ENCODE measurements at regions of chr22 and their contacts with region 1.

Region 1: DNA sequence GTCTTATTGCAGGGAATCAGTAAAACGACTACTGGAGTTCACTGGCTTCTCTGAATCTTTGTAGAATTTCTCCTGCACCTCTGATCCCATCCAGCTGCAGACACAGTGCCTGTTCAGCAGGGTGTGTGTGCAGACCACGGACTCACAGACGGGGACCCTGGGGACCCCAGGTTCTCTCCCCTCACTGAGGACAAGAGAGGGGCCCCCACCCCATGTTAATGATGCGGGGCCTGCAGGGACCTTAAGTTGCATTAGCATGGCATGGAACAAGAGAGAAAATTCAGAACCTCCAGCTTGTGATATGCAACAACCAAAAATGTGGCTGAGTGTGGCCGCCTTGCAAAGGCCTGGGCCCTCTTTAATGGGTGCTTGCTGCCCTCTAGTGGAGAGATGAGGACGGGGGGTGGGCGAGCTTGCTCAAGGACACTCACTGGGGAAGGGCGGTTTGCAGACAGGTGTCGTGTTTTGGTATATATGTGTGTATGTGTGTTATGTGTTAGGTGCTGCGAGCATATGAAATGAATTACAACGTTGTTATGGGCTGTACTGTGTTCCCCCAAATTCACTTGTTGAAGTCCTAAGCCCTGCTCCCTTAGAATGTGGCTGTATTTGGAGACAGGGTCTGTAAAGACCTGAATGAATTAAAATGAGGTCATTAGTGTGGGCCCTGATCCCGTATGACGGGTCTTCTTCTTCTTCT is 84.4 kb upstream of the SEPTIN5 start:
- DNase-seq: peak; percentile 80
- H3K4me3 ChIP-seq: no peak overlapping the region
- H3K27ac ChIP-seq: no peak overlapping the region
- H3K4me1 ChIP-seq: no peaks in the 10 kb centered on the region
- H3K27me3 ChIP-seq: peaks cover 0 to 5% of the 10 kb centered on the region in 2 experiments
- CTCF ChIP-seq: peak; percentile 91 to 92
- POLR2A ChIP-seq: no peak

Region 2: GRCh38 chr22:19143967-19144400 is 485.9 kb before region 1 on chr22:
- CTCF ChIA-PET with region 1: interaction called, 6 read pairs
- POLR2A ChIA-PET with region 1: interaction called, 3 read pairs
- dilution Hi-C with region 1: no loop called
- intact Hi-C with region 1: loop called (anchors 1 kb)
- DNase-seq: no peak
- H3K4me3 ChIP-seq: peak overlapping the region; percentile 69 to 94 (median 78)
- H3K27ac ChIP-seq: peak overlapping the region; percentile 54
- H3K4me1 ChIP-seq: peaks cover 7% of the 10 kb centered on the region
- H3K27me3 ChIP-seq: peaks cover 17 to 21% of the 10 kb centered on the region in 2 experiments
- CTCF ChIP-seq: no peak
- POLR2A ChIP-seq: no peak

Region 3: DNA sequence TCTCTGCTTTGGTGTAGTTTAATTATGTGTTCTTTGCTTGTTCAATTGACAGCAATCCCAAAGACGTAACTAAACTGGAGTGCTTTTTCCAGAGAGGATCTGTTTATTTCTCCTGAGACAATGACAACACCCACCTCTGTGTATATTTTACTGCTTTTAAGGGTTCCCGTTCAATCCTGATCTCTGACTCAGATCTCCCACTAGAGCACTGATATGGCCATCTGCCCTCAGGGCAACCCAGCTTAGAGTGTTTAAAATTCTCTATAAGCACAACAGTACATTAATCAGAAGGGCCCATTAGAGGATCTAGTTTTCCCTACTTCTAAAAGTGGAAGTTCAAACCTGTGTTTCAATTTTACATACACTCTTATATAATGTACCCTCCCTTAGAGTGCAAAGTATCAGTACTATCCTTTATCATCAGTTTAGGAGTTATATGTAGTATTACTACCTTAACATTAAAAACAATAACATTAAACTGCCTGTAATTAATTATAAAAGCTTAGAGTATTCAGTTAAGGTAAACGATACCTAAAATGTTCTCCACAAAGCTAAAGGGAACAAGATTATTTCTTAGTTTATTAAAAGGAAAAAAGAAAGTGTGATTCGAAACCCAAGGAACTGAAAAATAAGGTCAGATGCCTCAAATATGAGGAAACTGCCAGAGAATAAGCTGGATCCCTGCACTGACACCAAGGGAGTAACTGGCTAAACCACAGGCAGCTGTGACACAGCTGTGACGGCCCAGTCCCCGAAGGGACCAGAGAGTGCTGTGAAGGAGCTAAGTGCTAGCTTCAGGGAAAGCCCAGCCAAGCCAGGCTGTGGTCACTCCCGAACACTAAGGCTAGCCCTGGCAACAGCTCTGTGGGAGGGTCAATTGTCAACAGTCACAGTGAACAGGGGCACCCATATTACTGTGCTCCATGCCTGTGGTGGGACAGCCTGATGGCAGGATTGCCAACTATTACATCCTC is 166.1 kb before region 1 on chr22:
- CTCF ChIA-PET with region 1: interaction called, 13 read pairs
- POLR2A ChIA-PET with region 1: no interaction called
- dilution Hi-C with region 1: no loop called
- intact Hi-C with region 1: no loop called
- DNase-seq: no peak
- H3K4me3 ChIP-seq: no peak overlapping the region
- H3K27ac ChIP-seq: no peak overlapping the region
- H3K4me1 ChIP-seq: no peaks in the 10 kb centered on the region
- H3K27me3 ChIP-seq: no peaks in the 10 kb centered on the region
- CTCF ChIP-seq: no peak
- POLR2A ChIP-seq: no peak

Region 4: GRCh38 chr22:19495562-19496323 is 134.1 kb before region 1 on chr22:
- CTCF ChIA-PET with region 1: interaction called, 358 read pairs
- POLR2A ChIA-PET with region 1: interaction called, 6 read pairs
- dilution Hi-C with region 1: no loop called
- intact Hi-C with region 1: loop called (anchors 1 kb)
- DNase-seq: peak; percentile 69
- H3K4me3 ChIP-seq: no peak overlapping the region
- H3K27ac ChIP-seq: no peak overlapping the region
- H3K4me1 ChIP-seq: no peaks in the 10 kb centered on the region
- H3K27me3 ChIP-seq: no peaks in the 10 kb centered on the region
- CTCF ChIP-seq: peak; percentile 24 to 37
- POLR2A ChIP-seq: no peak

Region 5: DNA sequence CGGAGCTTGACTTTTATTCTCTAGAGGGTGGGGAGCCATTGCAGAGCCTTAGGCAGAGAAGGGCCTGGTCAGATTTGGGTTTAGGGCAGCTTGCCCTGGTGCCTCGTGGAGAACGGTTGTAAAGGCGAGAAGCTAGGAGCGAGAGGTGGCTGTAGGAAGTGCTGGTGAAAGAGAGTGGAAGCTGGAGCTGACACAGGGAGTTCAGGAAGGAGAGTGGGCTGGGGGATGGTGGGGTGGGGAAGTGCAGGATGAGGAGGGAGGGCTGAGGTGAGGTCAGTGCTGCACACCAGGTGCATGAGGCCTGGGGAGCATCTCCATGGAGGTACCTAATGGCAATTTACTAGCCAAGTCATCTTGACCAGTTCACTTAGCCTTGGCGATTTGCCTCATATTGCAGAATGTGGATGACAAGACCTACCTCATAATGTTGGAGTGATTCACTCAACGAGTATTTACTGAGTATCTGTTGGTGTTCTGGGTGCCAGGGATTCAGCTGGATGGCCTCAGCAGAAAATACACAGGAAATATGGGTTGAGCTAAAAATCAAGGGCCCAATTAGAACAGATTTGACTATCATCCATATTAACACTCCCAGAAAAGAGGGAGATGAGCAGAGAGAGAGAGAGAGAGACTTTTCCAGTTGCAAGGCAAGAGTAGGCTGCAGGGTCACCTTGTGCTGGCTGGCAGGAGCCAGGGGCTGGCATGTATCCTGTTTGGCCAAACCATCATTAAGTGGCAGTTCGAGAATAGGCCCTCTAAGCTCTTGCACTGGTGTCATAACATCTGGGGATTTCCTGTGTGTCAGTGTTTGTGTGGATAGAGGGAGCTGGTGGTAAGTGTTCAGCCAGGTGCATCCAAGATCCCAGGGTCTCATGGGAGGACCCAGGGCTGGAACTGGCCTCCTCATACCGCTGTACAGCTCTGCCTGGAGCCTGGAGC is 61.3 kb before region 1 on chr22:
- CTCF ChIA-PET with region 1: interaction called, 13 read pairs
- POLR2A ChIA-PET with region 1: no interaction called
- dilution Hi-C with region 1: no loop called
- intact Hi-C with region 1: no loop called
- DNase-seq: peak; percentile 45
- H3K4me3 ChIP-seq: no peak overlapping the region
- H3K27ac ChIP-seq: peak overlapping the region; percentile 88
- H3K4me1 ChIP-seq: peaks cover 50% of the 10 kb centered on the region
- H3K27me3 ChIP-seq: no peaks in the 10 kb centered on the region
- CTCF ChIP-seq: no peak
- POLR2A ChIP-seq: no peak

Region 6: DNA sequence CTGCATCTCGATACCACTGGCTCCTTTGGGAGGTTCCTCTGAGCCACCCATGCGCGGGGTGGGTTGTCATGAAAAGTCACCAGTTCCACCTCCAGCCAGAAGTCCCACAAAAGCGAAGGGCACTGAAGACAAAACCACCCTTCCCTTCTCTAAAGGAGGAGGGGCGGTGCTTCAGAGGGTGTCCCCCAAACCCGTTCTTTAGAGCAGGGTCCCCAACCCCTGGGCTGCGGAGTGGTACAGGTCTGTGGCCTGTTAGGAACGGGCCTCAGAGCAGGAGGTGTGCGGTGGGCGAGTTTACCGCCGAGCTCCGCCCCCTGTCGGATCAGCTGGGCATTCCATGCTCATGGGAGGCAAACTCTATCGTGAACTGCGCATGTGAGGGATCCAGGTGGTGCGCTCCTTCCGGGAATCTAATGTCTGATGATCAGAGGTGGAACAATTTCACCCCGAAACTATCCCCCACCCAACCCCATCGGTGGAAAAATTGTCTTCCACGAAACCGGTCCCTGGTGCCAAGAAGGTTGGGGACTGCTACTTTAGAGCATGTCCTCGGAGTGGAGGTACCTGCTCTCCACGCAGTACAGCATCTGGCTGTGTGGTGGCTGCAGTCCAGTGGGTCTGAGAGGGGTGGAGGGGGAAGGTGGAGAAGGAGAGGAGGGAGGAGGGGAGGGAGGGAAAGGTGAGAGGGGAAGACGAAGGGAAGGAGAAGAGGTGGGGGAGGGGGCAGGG is 11.5 kb after region 1 on chr22:
- CTCF ChIA-PET with region 1: interaction called, 19 read pairs
- POLR2A ChIA-PET with region 1: no interaction called
- dilution Hi-C with region 1: no loop called
- intact Hi-C with region 1: no loop called
- DNase-seq: peak; percentile 26
- H3K4me3 ChIP-seq: no peak overlapping the region
- H3K27ac ChIP-seq: no peak overlapping the region
- H3K4me1 ChIP-seq: no peaks in the 10 kb centered on the region
- H3K27me3 ChIP-seq: peaks cover 0 to 6% of the 10 kb centered on the region in 2 experiments
- CTCF ChIP-seq: peak; percentile 61 to 70
- POLR2A ChIP-seq: no peak